Ascending aorta (tissue), 2 donors: ENCODE measurements at regions of chr1 and their contacts with region 1.

Region 1: GRCh38 chr1:46340404-46341221 is at the start of gene NSUN4:
- DNase-seq: peak; percentile 86 to 97
- H3K4me3 ChIP-seq: peak within 1 kb of the TSS; percentile 64 to 87
- H3K27ac ChIP-seq: peak within 1 kb of the TSS; percentile 98 to 99
- H3K4me1 ChIP-seq: peaks cover 0 to 12% of the 10 kb centered on the region in 2 donors
- H3K27me3 ChIP-seq: no peaks in the 10 kb centered on the region
- CTCF ChIP-seq: peak; percentile 48 to 79 (median 73)
- total RNA-seq, gene NSUN4: 6.1 TPM

Region 2: GRCh38 chr1:46036894-46037839 is 303.4 kb before region 1 on chr1:
- intact Hi-C with region 1: loop called (anchors 10 kb)
- DNase-seq: peak; percentile 33 to 93
- H3K4me3 ChIP-seq: no peak overlapping the region
- H3K27ac ChIP-seq: no peak overlapping the region
- H3K4me1 ChIP-seq: no peaks in the 10 kb centered on the region
- H3K27me3 ChIP-seq: no peaks in the 10 kb centered on the region
- CTCF ChIP-seq: peak; percentile 96 to 97 (median 96)

Region 3: DNA sequence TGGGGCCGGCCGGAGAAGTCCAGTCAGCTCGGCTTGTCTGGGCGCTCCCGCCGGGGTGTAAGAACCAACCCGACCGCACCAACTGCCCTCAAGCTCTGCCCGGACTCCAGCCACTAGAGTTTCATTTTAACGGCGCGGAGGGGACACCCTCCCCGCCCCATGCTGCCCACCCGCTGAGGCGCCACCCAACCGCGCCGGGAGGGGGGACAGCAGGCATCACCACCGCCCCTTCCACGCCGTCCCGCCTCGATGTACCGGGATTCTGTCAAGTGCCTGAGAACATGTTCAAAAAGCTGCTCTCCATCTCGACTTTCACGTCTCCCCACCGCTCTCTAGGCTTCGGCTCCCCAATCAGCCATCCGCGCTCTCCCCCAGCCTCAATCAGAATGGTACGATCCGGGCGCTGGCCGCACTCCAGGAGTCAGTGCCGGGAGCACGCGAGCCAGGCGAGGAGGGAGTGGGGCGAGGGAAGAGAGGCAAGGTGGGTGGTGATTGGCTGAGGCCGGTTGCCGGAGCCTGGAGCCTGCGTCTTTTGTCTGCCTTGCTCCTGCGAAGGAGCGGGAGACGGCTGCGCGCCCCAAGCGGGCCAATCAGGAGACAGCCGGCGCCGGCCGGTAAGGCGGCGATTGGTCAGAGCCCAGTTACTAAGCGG is 208.0 kb before region 1 on chr1 and contains the start of gene PIK3R3:
- intact Hi-C with region 1: loop called (anchors 5 kb)
- DNase-seq: peak; percentile 90 to 99
- H3K4me3 ChIP-seq: peak within 1 kb of the TSS; percentile 71 to 83
- H3K27ac ChIP-seq: peak within 1 kb of the TSS; percentile 90 to 97
- H3K4me1 ChIP-seq: peaks cover 5 to 16% of the 10 kb centered on the region in 2 donors
- H3K27me3 ChIP-seq: no peaks in the 10 kb centered on the region
- CTCF ChIP-seq: peak in 2 of 3 experiments; percentile 10 to 18
- total RNA-seq, gene PIK3R3: 33.1 TPM

Region 4: GRCh38 chr1:46247436-46248121 is 93.0 kb before region 1 on chr1 and contains the start of gene RAD54L:
- intact Hi-C with region 1: loop called (anchors 1 kb)
- DNase-seq: peak; percentile 92 to 99
- H3K4me3 ChIP-seq: peak within 1 kb of the TSS; percentile 75 to 80
- H3K27ac ChIP-seq: peak within 1 kb of the TSS; percentile 64 to 67
- H3K4me1 ChIP-seq: peaks cover 0 to 13% of the 10 kb centered on the region in 2 donors
- H3K27me3 ChIP-seq: no peaks in the 10 kb centered on the region
- CTCF ChIP-seq: no peak
- total RNA-seq, gene RAD54L: not detected